ENCODE measurements at regions of chr19 and their contacts with region 1.

Region 1: GRCh38 chr19:46614114-46614722 is 10.7 kb downstream of the PTGIR start:
- DNase-seq: peak; percentile 88 to 93
- H3K4me3 ChIP-seq: no peak overlapping the region
- H3K27ac ChIP-seq: peak overlapping the region in 1 of 5 donors; percentile 2
- H3K4me1 ChIP-seq: peaks cover 22 to 45% (median 27%) of the 10 kb centered on the region in 4 donors
- H3K27me3 ChIP-seq: no peaks in the 10 kb centered on the region
- CTCF ChIP-seq: peak in 6 of 7 experiments; percentile 54 to 91 (median 86)
- EP300 ChIP-seq: no peak
- POLR2A ChIP-seq: no peak

Region 2: GRCh38 chr19:46564701-46565100 is 49.5 kb before region 1 on chr19:
- intact Hi-C with region 1: no loop called
- DNase-seq: no peak
- H3K4me3 ChIP-seq: no peak overlapping the region
- H3K27ac ChIP-seq: no peak overlapping the region
- H3K4me1 ChIP-seq: no peaks in the 10 kb centered on the region
- H3K27me3 ChIP-seq: no peaks in the 10 kb centered on the region
- CTCF ChIP-seq: no peak
- EP300 ChIP-seq: no peak
- POLR2A ChIP-seq: no peak

Region 3: DNA sequence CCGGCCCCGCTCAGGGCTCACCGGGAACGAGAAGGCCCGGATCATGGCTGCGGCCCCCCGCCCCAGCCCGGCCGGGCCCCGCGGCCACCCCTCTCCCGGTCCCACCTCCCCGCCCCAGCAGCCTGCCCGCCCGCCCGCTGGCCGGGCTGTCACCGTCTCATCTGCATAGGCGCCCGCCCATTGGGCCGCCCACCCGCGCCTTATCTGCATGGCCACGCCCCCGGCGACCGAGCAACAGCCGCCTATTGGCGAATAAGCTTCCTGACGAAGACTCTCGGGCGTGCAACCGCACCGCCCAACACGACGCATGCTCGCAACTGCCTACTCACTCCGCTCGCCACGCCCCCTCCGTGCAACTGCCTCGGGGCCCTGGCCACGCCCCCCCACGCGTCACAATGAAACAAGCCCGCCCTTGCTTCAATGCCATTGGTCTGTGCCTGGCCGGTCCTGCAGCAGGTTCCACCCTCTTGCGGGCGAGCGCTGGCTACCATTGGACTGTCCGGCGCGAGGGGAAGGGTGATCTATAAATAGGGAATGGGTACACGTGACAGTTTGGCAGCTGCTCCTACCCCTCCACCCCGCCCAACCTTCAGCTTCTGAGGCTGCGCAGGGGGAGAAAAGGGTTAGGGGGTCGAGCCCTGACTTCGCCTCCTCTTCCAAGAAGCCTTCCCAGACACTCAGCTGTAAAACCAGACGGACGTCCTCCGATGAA is 47.0 kb after region 1 on chr19 and contains the start of gene DACT3:
- intact Hi-C with region 1: loop called (anchors 5 kb)
- DNase-seq: peak; percentile 100
- H3K4me3 ChIP-seq: peak within 1 kb of the TSS; percentile 57 to 70 (median 64)
- H3K27ac ChIP-seq: peak within 1 kb of the TSS; percentile 58 to 90 (median 80)
- H3K4me1 ChIP-seq: peaks cover 27 to 40% (median 34%) of the 10 kb centered on the region in 4 donors
- H3K27me3 ChIP-seq: peaks cover 0 to 32% (median 23%) of the 10 kb centered on the region in 3 donors
- CTCF ChIP-seq: peak in 1 of 7 experiments; percentile 35
- EP300 ChIP-seq: no peak
- POLR2A ChIP-seq: no peak
- total RNA-seq, gene DACT3: 9.7 to 29.9 (median 11.1) TPM

Measured in stomach (tissue), 19 donors.